Sciatic nerve (tissue), 2 donors: ENCODE measurements at regions of chr1 and their contacts with region 1.

Region 1: GRCh38 chr1:109263597-109264398 is 14.5 kb downstream of the CELSR2 start:
- DNase-seq: peak; percentile 92
- ATAC-seq: peak; percentile 87

Region 2: GRCh38 chr1:109201123-109201703 is 62.6 kb before region 1 on chr1:
- intact Hi-C with region 1: no loop called
- DNase-seq: no peak
- ATAC-seq: peak; percentile 60

Region 3: GRCh38 chr1:109404838-109405237 is 141.0 kb after region 1 on chr1:
- intact Hi-C with region 1: loop called (anchors 5 kb)
- DNase-seq: no peak
- ATAC-seq: no peak